Right lobe of liver (tissue), 6 donors: ENCODE measurements at regions of chr12 and their contacts with region 1.

Region 1: DNA sequence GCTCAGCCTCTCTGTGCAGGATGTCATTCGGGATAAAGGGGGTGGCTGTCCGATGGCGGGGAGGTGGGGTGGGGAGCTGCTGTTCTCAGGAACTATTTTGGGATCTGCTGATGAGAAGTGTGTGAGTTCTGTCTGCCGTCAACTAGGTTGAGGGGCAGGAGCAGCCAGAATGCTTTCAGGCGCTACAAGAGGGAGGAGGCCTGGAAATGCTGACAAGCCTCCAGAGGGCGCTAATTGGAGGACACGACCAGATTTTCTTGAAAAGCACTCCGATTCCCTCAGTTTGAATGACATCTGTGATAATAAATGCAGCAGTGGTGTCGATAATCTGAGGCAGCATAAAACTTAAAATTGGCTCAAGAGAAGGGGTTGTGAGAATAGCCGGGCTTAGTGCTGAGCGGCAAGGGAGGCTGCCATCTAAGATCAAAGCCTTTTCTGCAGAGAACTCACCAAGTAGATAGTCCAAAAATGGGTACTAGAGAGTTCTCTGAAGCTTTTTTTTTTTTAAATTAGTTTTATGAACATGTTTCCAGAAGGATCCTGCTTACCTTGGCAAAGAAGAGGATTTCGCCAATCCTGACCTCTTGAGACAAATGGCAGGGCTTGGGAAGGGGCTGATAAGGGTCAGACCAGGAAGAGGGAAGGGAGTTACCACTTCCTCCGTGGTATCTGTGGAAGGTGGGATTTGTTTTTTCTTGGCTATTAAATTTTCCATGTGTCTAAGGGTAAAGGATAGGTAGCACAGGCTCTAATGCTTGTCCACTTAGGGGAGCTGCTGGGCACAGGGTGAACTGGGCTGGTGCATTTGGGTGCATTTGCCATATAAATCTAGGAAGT is 94.4 kb downstream of the CRACR2A start:
- DNase-seq: no peak
- ATAC-seq: peak; percentile 22 to 65 (median 59)
- H3K4me3 ChIP-seq: no peak overlapping the region
- H3K27ac ChIP-seq: no peak overlapping the region
- H3K4me1 ChIP-seq: no peaks in the 10 kb centered on the region
- H3K27me3 ChIP-seq: no peaks in the 10 kb centered on the region
- CTCF ChIP-seq: peak in 3 of 4 donors; percentile 43 to 57 (median 53)
- POLR2A ChIP-seq: no peak

Region 2: GRCh38 chr12:3365463-3366411 is 292.8 kb before region 1 on chr12:
- intact Hi-C with region 1: no loop called
- DNase-seq: peak in 1 of 3 donors; percentile 33
- ATAC-seq: peak; percentile 57 to 73 (median 62)
- H3K4me3 ChIP-seq: peak overlapping the region in 1 of 3 donors; percentile 28
- H3K27ac ChIP-seq: no peak overlapping the region
- H3K4me1 ChIP-seq: peaks cover 0 to 4% (median 0%) of the 10 kb centered on the region in 4 donors
- H3K27me3 ChIP-seq: no peaks in the 10 kb centered on the region
- CTCF ChIP-seq: no peak
- POLR2A ChIP-seq: no peak

Region 3: GRCh38 chr12:3752741-3753486 is 94.4 kb after region 1 on chr12 and contains the start of gene CRACR2A:
- intact Hi-C with region 1: no loop called
- DNase-seq: peak; percentile 59 to 79 (median 76)
- ATAC-seq: peak; percentile 44 to 56 (median 47)
- H3K4me3 ChIP-seq: peak within 1 kb of the TSS; percentile 40 to 51 (median 42)
- H3K27ac ChIP-seq: peak within 1 kb of the TSS; percentile 50 to 63 (median 56)
- H3K4me1 ChIP-seq: peaks cover 0 to 22% (median 13%) of the 10 kb centered on the region in 4 donors
- H3K27me3 ChIP-seq: no peaks in the 10 kb centered on the region
- CTCF ChIP-seq: peak; percentile 25 to 59 (median 40)
- POLR2A ChIP-seq: no peak
- total RNA-seq, gene CRACR2A: 0.43 to 1.5 (median 0.91) TPM

Region 4: DNA sequence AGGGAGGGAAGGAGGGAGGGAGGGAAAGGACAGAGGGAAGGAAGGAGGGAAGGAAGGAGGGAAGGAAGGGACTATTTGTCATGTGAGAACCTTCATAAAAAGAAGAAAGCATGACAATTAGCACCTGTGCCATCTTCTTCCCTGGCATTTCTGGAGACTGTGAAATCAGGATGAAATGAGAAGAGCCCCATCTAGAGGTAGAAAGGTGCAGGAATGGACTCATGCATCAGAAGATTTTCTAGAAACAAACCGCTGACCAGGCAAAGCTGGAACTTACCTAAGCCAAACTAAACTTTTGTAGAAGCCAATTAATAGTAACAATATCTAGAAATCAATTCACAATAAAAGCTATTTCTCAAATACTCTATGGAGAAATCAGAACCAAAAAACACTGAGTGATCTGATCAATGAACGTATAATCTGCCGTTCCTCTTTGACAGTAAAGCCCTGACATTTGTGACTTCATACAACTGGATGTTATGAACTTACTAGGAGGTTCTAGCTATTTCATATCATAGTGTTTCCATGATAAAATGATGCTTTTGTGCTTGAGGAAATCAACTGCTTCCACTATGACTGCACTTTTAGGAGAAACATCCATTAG is 118.8 kb after region 1 on chr12:
- intact Hi-C with region 1: loop called in 1 of 2 experiments (anchors 5 kb)
- DNase-seq: no peak
- ATAC-seq: peak; percentile 83 to 94 (median 90)
- H3K4me3 ChIP-seq: no peak overlapping the region
- H3K27ac ChIP-seq: no peak overlapping the region
- H3K4me1 ChIP-seq: no peaks in the 10 kb centered on the region
- H3K27me3 ChIP-seq: no peaks in the 10 kb centered on the region
- CTCF ChIP-seq: peak; percentile 71 to 81 (median 76)
- POLR2A ChIP-seq: no peak